Panc1 (cell line): ENCODE measurements at regions of chr6 and their contacts with region 1.

Region 1: DNA sequence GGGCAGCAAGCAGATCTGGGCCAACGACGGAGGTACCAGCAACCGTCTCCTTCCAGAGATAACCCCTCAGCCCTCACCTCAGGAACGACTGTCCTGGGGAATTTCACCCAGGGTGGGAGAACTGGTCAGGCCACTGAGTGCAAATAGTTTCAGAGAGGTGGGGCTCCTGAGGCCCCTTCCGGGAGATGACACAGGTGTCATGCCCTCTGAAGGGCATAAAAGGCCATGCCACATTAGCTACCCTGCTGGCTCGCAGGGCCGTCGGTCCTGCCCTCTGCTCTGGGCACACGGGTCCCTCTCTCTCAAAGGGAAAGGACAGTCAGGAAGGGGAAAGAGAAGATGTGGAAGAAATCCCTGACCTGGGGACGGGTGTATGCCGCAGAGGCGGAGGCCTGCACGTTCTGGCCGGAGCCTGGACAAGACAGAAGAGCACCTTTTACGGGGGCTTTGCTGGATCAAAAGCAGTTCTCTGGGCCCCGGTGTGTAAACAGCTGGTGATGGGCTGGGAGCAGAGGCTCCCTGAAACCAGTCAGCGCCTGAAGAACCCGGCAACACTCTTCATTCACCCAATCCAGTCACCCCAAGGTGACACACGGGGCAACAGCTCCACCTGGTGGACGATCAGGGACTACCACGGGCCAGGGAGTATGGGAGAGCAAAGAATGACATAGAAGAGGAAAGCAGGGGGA is 6.4 kb upstream of the TAF8 start:
- DNase-seq: peak; percentile 64
- ATAC-seq: peak; percentile 87
- H3K4me3 ChIP-seq: no peak overlapping the region
- H3K27ac ChIP-seq: peak overlapping the region; percentile 44
- H3K4me1 ChIP-seq: peaks cover 23% of the 10 kb centered on the region
- H3K27me3 ChIP-seq: no peaks in the 10 kb centered on the region
- CTCF ChIP-seq: peak; percentile 94

Region 2: DNA sequence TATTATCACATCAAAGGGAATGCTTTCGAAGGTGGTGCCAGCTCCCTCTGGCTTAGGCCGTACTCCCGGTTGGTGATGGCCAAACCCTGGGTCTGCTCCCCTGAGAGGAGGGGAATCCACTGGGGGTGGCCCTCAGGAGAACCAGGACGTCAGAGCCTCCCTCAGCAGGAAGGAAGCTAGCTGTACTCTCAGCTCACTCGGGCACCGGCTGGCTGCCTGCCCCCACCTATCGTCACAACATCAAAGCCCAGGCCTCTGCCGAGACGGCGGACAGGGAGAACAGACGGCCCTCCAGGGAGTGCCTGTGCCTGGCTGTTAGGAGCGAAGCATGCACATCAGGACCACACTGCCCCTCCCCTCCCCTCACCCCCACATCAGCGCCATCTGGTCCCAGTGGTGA is 287.6 kb before region 1 on chr6:
- CTCF ChIA-PET with region 1: no interaction called
- POLR2A ChIA-PET with region 1: no interaction called
- in situ Hi-C with region 1: no loop called
- intact Hi-C with region 1: no loop called
- DNase-seq: no peak
- ATAC-seq: no peak
- H3K4me3 ChIP-seq: no peak overlapping the region
- H3K27ac ChIP-seq: no peak overlapping the region
- H3K4me1 ChIP-seq: no peaks in the 10 kb centered on the region
- H3K27me3 ChIP-seq: no peaks in the 10 kb centered on the region
- CTCF ChIP-seq: no peak

Region 3: GRCh38 chr6:41779793-41780545 is 264.0 kb before region 1 on chr6 and contains the start of gene FRS3:
- CTCF ChIA-PET with region 1: no interaction called
- POLR2A ChIA-PET with region 1: no interaction called
- in situ Hi-C with region 1: no loop called
- intact Hi-C with region 1: loop called (anchors 5 kb)
- DNase-seq: peak; percentile 71
- ATAC-seq: peak; percentile 93
- H3K4me3 ChIP-seq: peak within 1 kb of the TSS; percentile 68 to 78
- H3K27ac ChIP-seq: peak within 1 kb of the TSS; percentile 74; the same call in 1 of the 2 replicates
- H3K4me1 ChIP-seq: peaks cover 5% of the 10 kb centered on the region
- H3K27me3 ChIP-seq: no peaks in the 10 kb centered on the region
- CTCF ChIP-seq: peak; percentile 98
- total RNA-seq, gene FRS3: 3.0 TPM

Region 4: GRCh38 chr6:41801380-41801779 is 242.6 kb before region 1 on chr6:
- CTCF ChIA-PET with region 1: interaction called, 10 read pairs
- POLR2A ChIA-PET with region 1: no interaction called
- in situ Hi-C with region 1: no loop called
- intact Hi-C with region 1: no loop called
- DNase-seq: no peak
- ATAC-seq: peak; percentile 73; the same call in 1 of the 2 replicates
- H3K4me3 ChIP-seq: no peak overlapping the region
- H3K27ac ChIP-seq: no peak overlapping the region
- H3K4me1 ChIP-seq: no peaks in the 10 kb centered on the region
- H3K27me3 ChIP-seq: no peaks in the 10 kb centered on the region
- CTCF ChIP-seq: no peak; the same call in 1 of the 2 replicates

Region 5: GRCh38 chr6:41846666-41847237 is 197.2 kb before region 1 on chr6:
- CTCF ChIA-PET with region 1: interaction called, 6 read pairs
- POLR2A ChIA-PET with region 1: interaction called, 3 read pairs
- in situ Hi-C with region 1: no loop called
- intact Hi-C with region 1: loop called (anchors 1 kb)
- DNase-seq: peak; percentile 84
- ATAC-seq: peak; percentile 93
- H3K4me3 ChIP-seq: no peak overlapping the region
- H3K27ac ChIP-seq: no peak overlapping the region
- H3K4me1 ChIP-seq: no peaks in the 10 kb centered on the region
- H3K27me3 ChIP-seq: no peaks in the 10 kb centered on the region
- CTCF ChIP-seq: peak; percentile 86

Region 6: GRCh38 chr6:41936073-41936837 is 107.7 kb before region 1 on chr6:
- CTCF ChIA-PET with region 1: interaction called, 3 read pairs
- POLR2A ChIA-PET with region 1: no interaction called
- in situ Hi-C with region 1: no loop called
- intact Hi-C with region 1: loop called (anchors 1 kb)
- DNase-seq: peak; percentile 80
- ATAC-seq: peak; percentile 82
- H3K4me3 ChIP-seq: no peak overlapping the region
- H3K27ac ChIP-seq: peak overlapping the region; percentile 3; the same call in 1 of the 2 replicates
- H3K4me1 ChIP-seq: peaks cover 39% of the 10 kb centered on the region
- H3K27me3 ChIP-seq: no peaks in the 10 kb centered on the region
- CTCF ChIP-seq: peak; percentile 94

Region 7: DNA sequence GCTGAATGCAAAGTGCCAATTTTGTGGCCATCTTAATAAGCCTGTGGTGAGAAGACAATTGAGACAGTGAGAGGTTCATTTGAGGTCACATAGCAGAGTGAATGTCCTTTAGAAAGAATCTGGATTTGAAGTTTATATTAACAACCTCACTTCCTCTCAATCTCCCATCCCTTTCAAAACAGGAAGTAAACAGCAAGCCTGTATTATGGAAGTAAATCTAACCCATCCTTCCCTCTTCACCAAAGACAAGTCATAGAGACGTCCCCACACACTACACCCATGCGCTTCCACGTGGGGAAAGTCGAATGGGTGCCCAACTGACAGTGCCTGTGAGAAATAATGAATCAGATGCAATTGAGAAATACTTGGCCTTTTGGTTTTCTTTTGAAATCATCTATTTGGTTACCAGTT is 73.5 kb before region 1 on chr6:
- CTCF ChIA-PET with region 1: no interaction called
- POLR2A ChIA-PET with region 1: no interaction called
- in situ Hi-C with region 1: no loop called
- intact Hi-C with region 1: no loop called
- DNase-seq: no peak
- ATAC-seq: no peak
- H3K4me3 ChIP-seq: no peak overlapping the region
- H3K27ac ChIP-seq: no peak overlapping the region
- H3K4me1 ChIP-seq: 0 out of 2 replicates have a peak, but pooled peaks cover 3% of the 10 kb centered on the region
- H3K27me3 ChIP-seq: no peaks in the 10 kb centered on the region
- CTCF ChIP-seq: no peak

Region 8: DNA sequence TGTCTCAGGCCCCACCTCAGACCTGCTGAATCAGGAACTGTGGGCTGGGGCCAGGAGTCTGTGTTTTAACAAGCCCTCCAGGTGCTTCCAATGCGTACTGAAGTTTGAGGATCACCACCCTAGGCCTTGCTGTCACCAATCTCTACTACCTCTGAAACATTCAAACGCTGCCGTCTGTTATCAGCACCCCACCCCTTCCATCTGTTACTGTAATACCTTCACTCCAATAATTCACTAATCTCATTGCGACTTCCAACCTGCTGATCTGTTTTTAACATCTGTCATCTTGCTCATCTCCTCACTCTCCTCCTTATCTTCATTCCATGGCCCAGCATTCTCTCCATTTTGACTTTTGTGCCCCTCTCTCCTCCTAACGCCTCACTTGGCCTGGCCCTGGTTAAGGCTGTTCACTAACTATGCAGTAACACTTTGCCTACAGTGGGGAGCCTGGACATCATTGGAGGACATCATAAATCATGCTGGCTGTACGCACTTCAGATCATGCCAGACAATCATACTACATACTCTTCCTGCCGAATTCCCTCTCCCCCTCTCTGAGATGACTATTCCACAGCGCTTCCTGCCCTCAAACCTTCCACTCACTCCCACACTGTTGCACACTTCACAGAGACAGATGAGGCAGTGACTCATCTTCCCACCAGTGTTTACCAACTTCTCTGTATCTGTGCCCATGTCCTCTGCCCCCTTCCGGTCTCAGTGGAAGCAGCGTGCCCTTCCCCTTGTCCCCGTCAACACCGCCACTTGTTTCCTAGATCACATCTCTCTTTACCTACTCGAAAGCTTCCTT is 153.8 kb after region 1 on chr6:
- CTCF ChIA-PET with region 1: no interaction called
- POLR2A ChIA-PET with region 1: no interaction called
- in situ Hi-C with region 1: no loop called
- intact Hi-C with region 1: no loop called
- DNase-seq: no peak
- ATAC-seq: peak; percentile 57; the same call in 1 of the 2 replicates
- H3K4me3 ChIP-seq: no peak overlapping the region
- H3K27ac ChIP-seq: no peak overlapping the region
- H3K4me1 ChIP-seq: peaks cover 9% of the 10 kb centered on the region; the same call in 1 of the 2 replicates
- H3K27me3 ChIP-seq: no peaks in the 10 kb centered on the region
- CTCF ChIP-seq: no peak